Heart left ventricle (tissue), 16 donors: ENCODE measurements at regions of chr7 and their contacts with region 1.

Region 1: DNA sequence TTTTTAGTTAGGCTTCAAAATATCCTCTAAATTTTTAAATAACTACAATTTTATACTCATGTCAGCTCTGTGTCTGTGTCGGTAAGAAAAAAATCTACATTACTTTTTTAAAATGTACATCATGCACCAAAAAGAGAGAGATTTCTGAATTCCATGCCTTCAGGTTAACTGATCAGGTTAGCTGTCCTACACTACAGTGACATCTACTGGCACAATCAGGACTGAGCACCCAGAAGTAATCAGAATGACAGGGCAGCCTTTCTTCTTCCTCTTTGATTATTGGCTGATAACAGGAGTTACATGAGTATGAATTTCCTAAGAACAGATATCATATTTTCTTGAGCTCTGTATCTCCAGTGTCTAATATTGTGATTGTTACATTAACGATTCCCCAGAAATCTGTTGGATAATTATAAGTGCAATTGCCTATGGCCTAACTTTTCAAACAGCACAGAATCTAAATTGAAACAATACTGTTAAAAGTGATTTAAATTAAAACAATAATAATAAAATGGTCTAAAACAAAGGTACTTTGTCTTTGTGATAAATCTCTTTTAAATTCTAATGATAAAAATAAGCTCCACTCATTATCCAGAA is 41.8 kb upstream of the HYCC1 start:
- DNase-seq: peak in 2 of 5 donors; percentile 18 to 36
- ATAC-seq: peak; percentile 71 to 84 (median 78)
- H3K4me3 ChIP-seq: no peak overlapping the region
- H3K27ac ChIP-seq: no peak overlapping the region
- H3K4me1 ChIP-seq: peaks cover 0 to 4% (median 0%) of the 10 kb centered on the region in 12 donors
- H3K27me3 ChIP-seq: no peaks in the 10 kb centered on the region
- CTCF ChIP-seq: peak; percentile 78 to 94 (median 92)
- POLR2A ChIP-seq: no peak

Region 2: DNA sequence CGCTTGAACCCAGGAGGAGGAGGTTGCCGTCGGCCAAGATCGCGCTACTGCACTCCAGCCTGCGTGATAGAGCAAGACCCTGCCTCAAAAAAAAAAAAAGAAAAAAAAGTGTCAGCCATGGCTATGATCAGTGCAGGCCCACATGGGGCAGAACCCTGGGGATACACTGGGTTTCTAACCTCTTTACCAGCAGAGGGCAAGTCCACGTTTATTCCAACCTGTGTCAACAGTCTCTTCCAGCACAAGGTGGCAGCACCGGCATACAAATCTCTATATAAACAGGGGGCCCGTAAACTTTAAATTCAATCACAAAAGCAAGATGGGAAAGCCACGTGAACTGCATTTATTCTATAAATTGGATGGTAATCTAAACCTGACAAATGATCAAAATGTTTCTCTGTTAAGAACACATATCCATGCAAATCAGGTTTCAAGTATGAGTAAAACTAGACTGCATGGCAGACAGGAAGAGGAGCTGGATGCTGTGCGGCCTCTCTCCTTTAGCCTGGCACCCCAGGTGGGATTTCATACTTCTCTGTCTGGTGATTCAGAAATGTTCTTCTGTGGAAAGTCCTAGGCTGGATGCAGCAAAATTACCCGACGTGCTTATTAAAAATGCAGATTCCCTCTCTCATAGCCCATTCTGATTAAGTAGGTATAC is 495.7 kb before region 1 on chr7:
- intact Hi-C with region 1: loop called (anchors 1 to 5 kb)
- DNase-seq: peak in 4 of 5 donors; percentile 70 to 80 (median 73)
- ATAC-seq: peak; percentile 65 to 78 (median 72)
- H3K4me3 ChIP-seq: no peak overlapping the region
- H3K27ac ChIP-seq: peak overlapping the region in 6 of 12 donors; percentile 70 to 85 (median 82)
- H3K4me1 ChIP-seq: peaks cover 7 to 49% (median 37%) of the 10 kb centered on the region in 12 donors
- H3K27me3 ChIP-seq: no peaks in the 10 kb centered on the region
- CTCF ChIP-seq: peak; percentile 75 to 96 (median 90)
- POLR2A ChIP-seq: no peak

Region 3: GRCh38 chr7:22732556-22733126 is 323.0 kb before region 1 on chr7:
- intact Hi-C with region 1: loop called in 8 of 10 experiments (anchors 5 to 10 kb)
- DNase-seq: no peak
- ATAC-seq: no peak
- H3K4me3 ChIP-seq: no peak overlapping the region
- H3K27ac ChIP-seq: no peak overlapping the region
- H3K4me1 ChIP-seq: peaks cover 0 to 17% (median 3%) of the 10 kb centered on the region in 12 donors
- H3K27me3 ChIP-seq: peaks cover 0 to 2% (median 0%) of the 10 kb centered on the region in 9 donors
- CTCF ChIP-seq: peak in 8 of 12 donors; percentile 8 to 34 (median 22)
- POLR2A ChIP-seq: no peak

Region 4: DNA sequence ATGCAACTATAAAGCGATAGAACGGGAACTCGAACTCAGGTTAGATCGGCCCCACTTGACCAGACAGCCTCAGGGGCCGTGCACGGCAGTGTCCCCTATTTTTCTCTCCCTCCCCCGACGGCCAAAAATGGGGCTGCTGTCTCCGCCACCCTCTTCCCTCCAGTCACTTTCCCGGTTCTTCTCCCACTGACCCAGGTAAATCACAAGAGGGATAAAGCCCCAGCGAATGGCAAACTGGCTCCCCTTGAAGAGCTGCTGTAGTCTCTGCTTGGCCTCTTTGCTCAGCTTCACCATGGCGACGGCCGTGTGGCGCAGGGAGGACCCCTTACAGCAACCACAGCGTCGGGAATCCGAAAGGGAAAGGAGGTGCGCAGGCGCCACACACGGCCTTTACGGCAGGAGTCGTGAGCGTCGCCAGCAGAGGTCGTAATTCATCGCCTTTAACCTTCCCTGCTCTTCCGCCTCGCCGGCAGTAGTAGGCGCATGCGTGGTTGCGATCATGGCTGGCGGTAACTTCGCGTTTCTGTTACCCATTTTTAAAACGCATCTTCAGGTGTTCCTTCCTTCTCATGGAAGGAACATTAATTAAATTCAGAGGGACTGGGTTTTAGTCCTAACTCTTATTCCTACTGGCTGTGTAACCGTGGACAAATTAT is 233.1 kb before region 1 on chr7 and contains the start of gene TOMM7:
- intact Hi-C with region 1: loop called in 5 of 10 experiments (anchors 2 to 10 kb)
- DNase-seq: peak; percentile 91 to 94 (median 93)
- ATAC-seq: peak; percentile 96 to 98 (median 96)
- H3K4me3 ChIP-seq: peak within 1 kb of the TSS; percentile 56 to 97 (median 80)
- H3K27ac ChIP-seq: peak within 1 kb of the TSS in 11 of 12 donors; percentile 66 to 91 (median 85)
- H3K4me1 ChIP-seq: peaks cover 0 to 37% (median 20%) of the 10 kb centered on the region in 12 donors
- H3K27me3 ChIP-seq: no peaks in the 10 kb centered on the region
- CTCF ChIP-seq: peak; percentile 8 to 70 (median 54)
- POLR2A ChIP-seq: peak in 1 of 2 donors; percentile 70
- total RNA-seq, gene TOMM7: 137 to 529 (median 399) TPM

Region 5: DNA sequence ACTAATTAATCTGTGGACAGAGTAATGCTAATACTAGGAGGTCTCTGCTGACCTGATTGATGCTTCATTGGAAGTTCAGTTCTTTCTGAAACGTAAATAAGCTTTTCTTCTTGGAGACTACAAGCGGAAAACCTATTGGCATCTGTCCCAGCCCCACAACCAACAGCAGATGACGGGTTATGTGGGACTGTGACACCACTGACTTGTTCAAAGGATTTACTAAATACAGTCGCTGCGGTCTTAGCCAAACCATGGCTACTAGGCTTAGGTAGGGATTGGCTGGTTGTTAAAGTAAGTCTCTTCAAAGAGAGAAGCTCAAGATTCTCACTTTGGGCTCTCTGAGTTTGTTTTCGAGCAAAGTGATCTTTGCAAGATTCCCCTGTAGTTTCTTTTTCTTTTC is 110.1 kb before region 1 on chr7:
- intact Hi-C with region 1: no loop called
- DNase-seq: no peak
- ATAC-seq: no peak
- H3K4me3 ChIP-seq: no peak overlapping the region
- H3K27ac ChIP-seq: no peak overlapping the region
- H3K4me1 ChIP-seq: peaks cover 0 to 18% (median 0%) of the 10 kb centered on the region in 12 donors
- H3K27me3 ChIP-seq: no peaks in the 10 kb centered on the region
- CTCF ChIP-seq: no peak
- POLR2A ChIP-seq: no peak

Region 6: GRCh38 chr7:22980422-22980821 is 75.3 kb before region 1 on chr7:
- intact Hi-C with region 1: loop called in 2 of 10 experiments (anchors 10 kb)
- DNase-seq: no peak
- ATAC-seq: peak in 1 of 4 donors; percentile 46
- H3K4me3 ChIP-seq: no peak overlapping the region
- H3K27ac ChIP-seq: peak overlapping the region in 1 of 12 donors; percentile 46
- H3K4me1 ChIP-seq: peaks cover 0 to 9% (median 0%) of the 10 kb centered on the region in 12 donors
- H3K27me3 ChIP-seq: no peaks in the 10 kb centered on the region
- CTCF ChIP-seq: no peak
- POLR2A ChIP-seq: no peak